ENCODE measurements at regions of chr5 and their contacts with region 1.

Region 1: DNA sequence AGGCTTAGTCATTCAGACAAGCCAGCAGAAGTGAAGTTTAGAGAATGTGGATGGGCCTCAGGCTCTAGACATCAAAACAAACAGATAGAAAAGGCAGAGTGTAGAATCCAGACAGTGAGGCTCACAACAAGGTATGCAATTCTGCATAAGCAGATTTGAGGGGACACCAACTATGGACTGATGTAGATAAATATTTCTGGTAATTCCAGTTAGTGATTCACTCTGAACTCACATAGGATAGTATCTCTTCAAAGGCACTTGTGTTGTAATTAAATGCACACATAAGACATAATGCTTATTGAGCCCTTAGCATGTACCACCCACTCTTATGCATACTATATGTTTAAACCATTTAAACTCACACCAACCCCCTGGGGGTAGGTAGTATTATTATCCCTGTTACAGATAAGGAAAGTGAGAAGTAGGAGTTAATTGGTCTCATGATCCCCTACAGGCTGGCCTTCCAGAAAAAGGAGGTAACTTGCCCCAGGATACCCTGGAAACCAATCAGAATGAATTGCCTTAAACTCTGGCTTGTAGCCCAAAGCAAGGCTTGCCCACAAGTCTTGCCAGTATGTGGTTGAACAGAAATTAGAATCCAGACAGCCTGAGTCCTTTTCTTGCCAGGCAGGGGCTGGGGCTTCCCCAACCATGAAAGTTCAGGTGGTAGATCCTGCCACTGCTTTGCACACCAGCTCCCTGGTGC is 39.5 kb upstream of the HSPB3 start:
- DNase-seq: no peak
- ATAC-seq: no peak
- H3K4me3 ChIP-seq: no peak overlapping the region
- H3K27ac ChIP-seq: no peak overlapping the region
- H3K4me1 ChIP-seq: no peaks in the 10 kb centered on the region
- H3K27me3 ChIP-seq: no peaks in the 10 kb centered on the region
- CTCF ChIP-seq: no peak
- POLR2A ChIP-seq: no peak

Region 2: GRCh38 chr5:54254482-54255198 is 161.4 kb before region 1 on chr5:
- in situ Hi-C with region 1: loop called in 2 of 4 experiments (anchors 10 kb)
- intact Hi-C with region 1: loop called (anchors 2 kb)
- DNase-seq: no peak
- ATAC-seq: peak; percentile 74 to 80
- H3K4me3 ChIP-seq: peak overlapping the region in 3 of 4 donors; percentile 6 to 32 (median 21)
- H3K27ac ChIP-seq: peak overlapping the region in 1 of 4 donors; percentile 1
- H3K4me1 ChIP-seq: peaks cover 5 to 10% of the 10 kb centered on the region in 2 donors
- H3K27me3 ChIP-seq: no peaks in the 10 kb centered on the region
- CTCF ChIP-seq: peak in 1 of 5 experiments; percentile 15
- POLR2A ChIP-seq: no peak

Measured in gastrocnemius medialis (tissue), 4 donors.